ENCODE measurements at regions of chr4 and their contacts with region 1.

Region 1: GRCh38 chr4:174629265-174629664 is 107.0 kb upstream of the HPGD start:
- DNase-seq: no peak
- H3K4me3 ChIP-seq: no peak overlapping the region
- H3K27ac ChIP-seq: no peak overlapping the region
- H3K4me1 ChIP-seq: no peaks in the 10 kb centered on the region
- H3K27me3 ChIP-seq: no peaks in the 10 kb centered on the region
- CTCF ChIP-seq: no peak
- POLR2A ChIP-seq: no peak

Region 2: GRCh38 chr4:174365018-174365587 is 264.2 kb before region 1 on chr4:
- intact Hi-C with region 1: loop called (anchors 5 kb)
- DNase-seq: no peak
- H3K4me3 ChIP-seq: no peak overlapping the region
- H3K27ac ChIP-seq: no peak overlapping the region
- H3K4me1 ChIP-seq: no peaks in the 10 kb centered on the region
- H3K27me3 ChIP-seq: no peaks in the 10 kb centered on the region
- CTCF ChIP-seq: peak in 4 of 6 experiments; percentile 18 to 74 (median 47)
- POLR2A ChIP-seq: no peak

Region 3: GRCh38 chr4:174460684-174461083 is 168.6 kb before region 1 on chr4:
- intact Hi-C with region 1: no loop called
- DNase-seq: no peak
- H3K4me3 ChIP-seq: no peak overlapping the region
- H3K27ac ChIP-seq: peak overlapping the region in 1 of 3 donors; percentile 76
- H3K4me1 ChIP-seq: peaks cover 3 to 10% of the 10 kb centered on the region in 2 donors
- H3K27me3 ChIP-seq: no peaks in the 10 kb centered on the region
- CTCF ChIP-seq: no peak
- POLR2A ChIP-seq: no peak

Measured in thyroid gland (tissue), 4 donors.